Activated B cell treated with CpG ODN at 0.5 μM for 24 hours (primary cell): ENCODE measurements at regions of chr14 and their contacts with region 1.

Region 1: DNA sequence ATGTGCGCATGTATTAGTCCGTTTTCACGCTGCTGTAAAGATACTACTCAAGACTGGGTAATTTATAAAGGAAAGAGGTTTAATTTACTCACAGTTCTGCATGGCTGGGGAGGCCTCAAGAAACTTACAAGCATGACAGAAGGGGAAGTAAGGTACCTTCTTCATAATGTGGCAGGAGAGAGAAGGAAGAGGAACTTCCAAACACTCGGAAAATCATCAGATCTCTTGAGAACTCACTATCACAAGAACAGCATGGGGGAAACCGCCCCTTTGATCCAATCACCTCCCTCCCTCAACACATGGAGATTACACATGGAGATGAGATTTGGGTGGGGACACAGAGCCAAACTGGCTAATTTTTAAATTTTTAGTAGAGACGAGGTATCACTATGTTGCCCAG is 41.8 kb upstream of the SNX6 start:
- DNase-seq: no peak
- ATAC-seq: no peak
- H3K4me3 Mint-ChIP-seq: no peak overlapping the region
- H3K27ac Mint-ChIP-seq: no peak overlapping the region
- H3K4me1 Mint-ChIP-seq: no peaks in the 10 kb centered on the region
- H3K27me3 Mint-ChIP-seq: no peaks in the 10 kb centered on the region
- CTCF ChIP-seq: no peak

Region 2: GRCh38 chr14:34722717-34723545 is 51.2 kb after region 1 on chr14:
- CTCF ChIA-PET with region 1: interaction called, 46 read pairs
- POLR2A ChIA-PET with region 1: interaction called, 3 read pairs
- intact Hi-C with region 1: loop called (anchors 1 kb)
- DNase-seq: no peak
- ATAC-seq: peak; percentile 37
- H3K4me3 Mint-ChIP-seq: no peak overlapping the region
- H3K27ac Mint-ChIP-seq: no peak overlapping the region
- H3K4me1 Mint-ChIP-seq: peaks cover 4% of the 10 kb centered on the region
- H3K27me3 Mint-ChIP-seq: no peaks in the 10 kb centered on the region
- CTCF ChIP-seq: peak; percentile 78